Caco-2 (cell line): ENCODE measurements at regions of chr5 and their contacts with region 1.

Region 1: DNA sequence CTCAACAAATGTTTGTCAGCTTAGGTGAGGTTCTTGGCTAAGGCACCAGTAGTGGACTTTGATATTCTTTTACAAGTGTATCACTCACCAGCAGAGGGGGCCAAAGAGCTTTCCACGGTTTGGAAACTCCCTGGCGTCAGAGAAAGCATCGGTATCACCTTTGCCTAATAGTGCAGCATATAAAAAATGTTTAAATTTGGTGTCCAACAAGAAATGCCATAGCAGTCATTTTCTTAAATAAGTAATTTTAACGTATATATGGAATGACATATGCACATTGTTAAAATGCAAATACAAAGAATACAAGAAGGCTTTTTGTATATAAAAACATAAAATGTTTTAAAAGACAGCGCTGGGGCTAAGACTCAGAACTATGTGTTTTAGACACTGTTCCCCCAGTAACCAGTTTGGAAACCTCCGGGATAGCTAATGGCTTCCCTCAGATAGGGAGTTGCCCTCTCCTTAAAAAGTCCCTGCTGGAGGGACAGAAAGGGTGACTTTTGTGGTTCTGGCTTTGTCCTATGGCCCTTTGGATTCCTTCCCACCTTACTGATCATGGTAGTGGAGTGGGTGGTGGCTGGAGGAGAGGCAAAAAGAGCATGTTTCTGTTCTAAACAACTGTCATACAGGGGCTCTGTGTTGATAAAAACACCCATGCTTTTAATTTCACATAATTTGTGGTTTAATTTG is 124.6 kb downstream of the GPBP1 start:
- DNase-seq: peak; percentile 84 to 89
- H3K4me3 ChIP-seq: no peak overlapping the region
- H3K4me3 Mint-ChIP-seq: peak overlapping the region; percentile 53
- H3K27ac Mint-ChIP-seq: no peak overlapping the region
- H3K4me1 ChIP-seq: peaks cover 10% of the 10 kb centered on the region
- H3K4me1 Mint-ChIP-seq: peaks cover 10% of the 10 kb centered on the region
- H3K27me3 ChIP-seq: no peaks in the 10 kb centered on the region
- H3K27me3 Mint-ChIP-seq: no peaks in the 10 kb centered on the region
- CTCF ChIP-seq: peak; percentile 74 to 79

Region 2: DNA sequence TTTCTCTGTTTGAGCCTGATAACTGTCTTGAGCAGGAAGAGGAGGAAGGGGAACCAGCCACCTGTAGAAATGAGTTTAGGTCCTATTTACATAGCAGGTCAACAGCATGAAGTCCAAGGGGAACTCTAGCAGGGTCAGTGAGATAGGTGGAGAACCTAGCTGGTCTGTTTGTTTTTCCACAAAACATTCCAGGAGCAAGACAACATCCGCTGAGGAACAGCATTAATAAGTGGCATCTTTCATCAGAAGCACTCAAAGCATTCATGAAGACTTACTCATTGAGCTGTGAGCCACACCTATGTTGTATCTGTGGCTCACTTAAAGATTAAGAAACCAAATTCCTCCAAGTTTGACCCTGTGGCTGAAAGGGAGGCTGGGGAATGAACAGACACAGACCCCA is 68.3 kb after region 1 on chr5:
- CTCF ChIA-PET with region 1: interaction called, 4 read pairs
- POLR2A ChIA-PET with region 1: no interaction called
- intact Hi-C with region 1: loop called (anchors 2 kb)
- DNase-seq: peak; percentile 53 to 55
- H3K4me3 ChIP-seq: no peak overlapping the region
- H3K4me3 Mint-ChIP-seq: no peak overlapping the region
- H3K27ac Mint-ChIP-seq: no peak overlapping the region
- H3K4me1 ChIP-seq: peaks cover 26% of the 10 kb centered on the region
- H3K4me1 Mint-ChIP-seq: no peaks in the 10 kb centered on the region
- H3K27me3 ChIP-seq: no peaks in the 10 kb centered on the region
- H3K27me3 Mint-ChIP-seq: no peaks in the 10 kb centered on the region
- CTCF ChIP-seq: no peak

Region 3: GRCh38 chr5:57435701-57436134 is 137.3 kb after region 1 on chr5:
- CTCF ChIA-PET with region 1: no interaction called
- POLR2A ChIA-PET with region 1: no interaction called
- intact Hi-C with region 1: loop called (anchors 1 kb)
- DNase-seq: peak; percentile 72 to 80
- H3K4me3 ChIP-seq: no peak overlapping the region
- H3K4me3 Mint-ChIP-seq: no peak overlapping the region
- H3K27ac Mint-ChIP-seq: peak overlapping the region; percentile 38
- H3K4me1 ChIP-seq: peaks cover 34% of the 10 kb centered on the region
- H3K4me1 Mint-ChIP-seq: peaks cover 27% of the 10 kb centered on the region
- H3K27me3 ChIP-seq: no peaks in the 10 kb centered on the region
- H3K27me3 Mint-ChIP-seq: no peaks in the 10 kb centered on the region
- CTCF ChIP-seq: no peak

Region 4: DNA sequence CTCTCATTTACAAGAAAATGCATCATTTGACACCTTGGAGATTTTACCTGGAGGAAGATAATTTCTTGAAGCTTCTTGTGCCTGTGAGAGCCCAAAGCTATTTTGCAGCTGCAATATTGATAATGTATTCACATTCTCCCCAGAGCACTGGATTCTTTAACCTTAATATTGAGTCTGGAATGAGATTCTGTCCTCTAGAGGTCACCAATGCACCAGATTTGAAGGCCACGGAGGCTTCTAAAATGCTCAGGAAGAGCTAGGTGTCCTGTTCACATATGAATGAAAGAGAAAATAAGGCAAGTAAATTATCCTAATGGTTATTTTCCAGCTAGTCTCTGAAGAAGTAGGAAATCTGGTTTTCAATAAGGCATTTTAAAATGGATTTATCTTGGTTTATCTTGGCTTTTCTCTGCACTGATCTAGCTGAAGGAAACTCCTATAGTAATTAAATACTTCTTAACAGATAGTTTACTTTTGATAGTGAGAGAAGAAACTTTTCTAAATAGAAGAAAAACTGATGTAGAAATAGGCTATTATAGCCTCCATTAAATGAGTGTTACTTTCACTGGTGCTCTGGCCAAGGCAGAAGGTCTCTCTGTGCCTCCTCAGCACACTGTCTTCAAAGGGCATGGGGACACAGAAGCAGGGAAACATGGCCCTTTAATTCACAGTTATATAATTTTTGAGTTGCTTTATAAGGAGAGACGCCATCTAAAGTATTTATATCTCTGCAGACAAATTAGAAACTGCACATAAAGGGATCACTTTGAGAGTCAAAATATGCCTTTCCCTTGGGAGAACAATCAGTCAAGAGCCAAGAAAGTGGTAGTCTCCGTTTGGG is 481.2 kb after region 1 on chr5:
- CTCF ChIA-PET with region 1: no interaction called
- POLR2A ChIA-PET with region 1: no interaction called
- intact Hi-C with region 1: loop called (anchors 1 kb)
- DNase-seq: peak; percentile 50 to 69
- H3K4me3 ChIP-seq: no peak overlapping the region
- H3K4me3 Mint-ChIP-seq: no peak overlapping the region
- H3K27ac Mint-ChIP-seq: no peak overlapping the region
- H3K4me1 ChIP-seq: peaks cover 34% of the 10 kb centered on the region
- H3K4me1 Mint-ChIP-seq: peaks cover 21% of the 10 kb centered on the region
- H3K27me3 ChIP-seq: no peaks in the 10 kb centered on the region
- H3K27me3 Mint-ChIP-seq: no peaks in the 10 kb centered on the region
- CTCF ChIP-seq: peak; percentile 65 to 68

Region 5: GRCh38 chr5:57816108-57816507 is 517.7 kb after region 1 on chr5:
- CTCF ChIA-PET with region 1: no interaction called
- POLR2A ChIA-PET with region 1: no interaction called
- intact Hi-C with region 1: no loop called
- DNase-seq: no peak
- H3K4me3 ChIP-seq: no peak overlapping the region
- H3K4me3 Mint-ChIP-seq: no peak overlapping the region
- H3K27ac Mint-ChIP-seq: no peak overlapping the region
- H3K4me1 ChIP-seq: no peaks in the 10 kb centered on the region
- H3K4me1 Mint-ChIP-seq: no peaks in the 10 kb centered on the region
- H3K27me3 ChIP-seq: no peaks in the 10 kb centered on the region
- H3K27me3 Mint-ChIP-seq: peaks cover 2% of the 10 kb centered on the region
- CTCF ChIP-seq: no peak